Heart left ventricle (tissue), 16 donors: ENCODE measurements at regions of chr14 and their contacts with region 1.

Region 1: DNA sequence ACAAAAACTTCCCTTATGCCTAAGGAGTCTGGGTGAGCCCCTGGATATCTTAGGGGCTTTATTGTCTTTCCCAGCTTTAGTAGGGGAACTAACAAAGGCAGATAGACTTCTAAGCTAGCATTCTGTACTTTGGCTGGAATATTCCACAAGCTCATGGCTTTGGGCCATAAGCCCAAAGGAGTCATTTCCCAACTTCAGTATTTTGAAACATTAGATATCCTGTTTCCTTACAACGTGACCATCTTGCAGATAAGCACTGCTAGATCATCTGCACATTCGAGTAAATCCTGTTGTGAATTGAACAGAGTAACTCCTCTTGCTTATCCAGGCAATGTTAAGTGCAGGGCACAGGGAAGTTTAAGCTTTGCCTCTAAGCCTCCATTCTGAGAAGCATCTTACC is 70.6 kb upstream of the ACTN1 start:
- DNase-seq: peak in 3 of 5 donors; percentile 38 to 47 (median 44)
- ATAC-seq: peak; percentile 21 to 62 (median 58)
- H3K4me3 ChIP-seq: peak overlapping the region in 1 of 12 donors; percentile 1
- H3K27ac ChIP-seq: peak overlapping the region; percentile 35 to 87 (median 79)
- H3K4me1 ChIP-seq: peaks cover 24 to 89% (median 75%) of the 10 kb centered on the region in 12 donors
- H3K27me3 ChIP-seq: no peaks in the 10 kb centered on the region
- CTCF ChIP-seq: no peak
- POLR2A ChIP-seq: no peak

Region 2: GRCh38 chr14:68939893-68940613 is 109.6 kb before region 1 on chr14:
- intact Hi-C with region 1: loop called in 1 of 10 experiments (anchors 5 kb)
- DNase-seq: peak; percentile 82 to 93 (median 88)
- ATAC-seq: peak; percentile 70 to 80 (median 74)
- H3K4me3 ChIP-seq: peak overlapping the region in 1 of 12 donors; percentile 20
- H3K27ac ChIP-seq: peak overlapping the region; percentile 47 to 98 (median 85)
- H3K4me1 ChIP-seq: peaks cover 36 to 100% (median 98%) of the 10 kb centered on the region in 12 donors
- H3K27me3 ChIP-seq: no peaks in the 10 kb centered on the region
- CTCF ChIP-seq: peak in 1 of 12 donors; percentile 25
- POLR2A ChIP-seq: peak in 1 of 2 donors; percentile 24

Region 3: GRCh38 chr14:69079183-69079742 is 29.6 kb after region 1 on chr14:
- intact Hi-C with region 1: no loop called
- DNase-seq: no peak
- ATAC-seq: peak in 3 of 4 donors; percentile 36 to 84 (median 65)
- H3K4me3 ChIP-seq: no peak overlapping the region
- H3K27ac ChIP-seq: peak overlapping the region in 10 of 12 donors; percentile 11 to 74 (median 60)
- H3K4me1 ChIP-seq: peaks cover 0 to 28% (median 16%) of the 10 kb centered on the region in 12 donors
- H3K27me3 ChIP-seq: no peaks in the 10 kb centered on the region
- CTCF ChIP-seq: no peak
- POLR2A ChIP-seq: no peak